Activated T-helper 1 cell treated with anti-CD3 and anti-CD28 coated beads, Interleukin-12 subunit alpha, Interleukin-12 subunit beta, Interleukin-2, Interleukin-4 antibody, amounts not matched to agents 30 ng/mL and 10 ng/mL and 1 ng/mL, durations not matched to agents 14 hours and 24 hours and 36 hours (primary cell): ENCODE measurements at regions of chr21 and their contacts with region 1.

Region 1: GRCh38 chr21:31132574-31133242 is 94.4 kb upstream of the KRTAP19-8 start:
- DNase-seq: peak; percentile 80
- H3K4me3 Mint-ChIP-seq: peak overlapping the region; percentile 79
- H3K27ac Mint-ChIP-seq: peak overlapping the region; percentile 98
- H3K4me1 Mint-ChIP-seq: peaks cover 73% of the 10 kb centered on the region
- H3K27me3 Mint-ChIP-seq: no peaks in the 10 kb centered on the region

Region 2: GRCh38 chr21:30355906-30356305 is 776.8 kb before region 1 on chr21:
- intact Hi-C with region 1: no loop called
- DNase-seq: no peak
- H3K4me3 Mint-ChIP-seq: no peak overlapping the region
- H3K27ac Mint-ChIP-seq: no peak overlapping the region
- H3K4me1 Mint-ChIP-seq: no peaks in the 10 kb centered on the region
- H3K27me3 Mint-ChIP-seq: no peaks in the 10 kb centered on the region

Region 3: GRCh38 chr21:30718239-30718909 is 414.3 kb before region 1 on chr21 and contains the start of gene KRTAP21-3:
- intact Hi-C with region 1: loop called (anchors 1 kb)
- DNase-seq: no peak
- H3K4me3 Mint-ChIP-seq: peak within 1 kb of the TSS; percentile 7
- H3K27ac Mint-ChIP-seq: peak within 1 kb of the TSS; percentile 75
- H3K4me1 Mint-ChIP-seq: peaks cover 29% of the 10 kb centered on the region
- H3K27me3 Mint-ChIP-seq: peaks cover 2% of the 10 kb centered on the region
- total RNA-seq, gene KRTAP21-3: not detected in 2 replicates

Region 4: DNA sequence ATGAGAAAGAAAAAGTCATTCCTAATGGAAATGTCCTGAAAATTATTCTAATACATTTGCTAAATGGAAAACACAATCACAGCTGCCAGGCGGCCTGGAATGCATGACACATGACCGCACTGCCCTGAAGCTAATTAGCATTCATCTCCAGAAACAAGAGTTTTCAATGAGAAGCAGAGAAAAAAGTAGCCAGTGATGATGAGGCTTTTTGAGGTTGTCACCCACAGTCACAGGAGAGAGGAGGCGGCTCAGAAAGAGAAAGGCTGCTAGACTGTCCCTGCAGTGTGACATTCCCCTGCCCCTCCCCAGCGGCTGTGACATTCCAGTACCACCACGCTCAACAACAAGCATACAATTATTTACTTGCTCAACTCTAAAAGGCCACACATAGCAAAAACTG is 28.4 kb after region 1 on chr21:
- intact Hi-C with region 1: loop called (anchors 1 kb)
- DNase-seq: no peak
- H3K4me3 Mint-ChIP-seq: no peak overlapping the region
- H3K27ac Mint-ChIP-seq: no peak overlapping the region
- H3K4me1 Mint-ChIP-seq: peaks cover 66% of the 10 kb centered on the region
- H3K27me3 Mint-ChIP-seq: no peaks in the 10 kb centered on the region

Region 5: DNA sequence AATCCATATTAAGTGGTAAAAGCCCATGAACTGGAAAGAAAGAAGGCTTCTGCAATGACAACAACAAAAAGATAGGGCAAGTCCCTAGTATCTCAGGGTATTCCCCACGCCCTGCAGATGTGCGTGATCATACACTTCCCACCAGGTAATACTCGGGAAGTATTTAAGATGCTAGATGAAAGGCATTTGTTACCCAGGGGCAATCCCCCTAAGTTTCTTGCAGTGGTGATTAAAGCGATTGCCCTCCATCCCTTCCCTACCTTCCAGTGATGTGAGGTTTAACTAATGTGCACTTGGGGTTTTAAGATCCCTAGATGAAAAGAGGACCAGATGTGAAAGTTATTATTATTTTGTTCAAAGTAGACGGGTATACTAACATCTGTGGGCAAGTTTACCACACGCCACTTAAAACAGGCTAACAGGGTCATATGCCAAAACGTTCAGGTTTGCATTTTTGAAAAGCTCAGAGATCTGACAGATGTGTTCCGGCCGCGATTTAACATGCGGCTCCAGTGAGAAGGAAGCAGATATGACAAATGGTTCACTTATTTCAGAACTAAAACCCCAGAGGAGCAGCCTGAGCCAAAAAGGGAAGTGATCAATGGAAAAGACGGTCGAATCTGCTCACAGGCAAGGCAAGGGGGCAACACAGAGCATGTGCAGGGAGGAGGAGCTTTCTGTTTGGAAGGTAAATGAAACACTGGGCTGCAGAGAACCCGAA is 194.0 kb after region 1 on chr21:
- intact Hi-C with region 1: loop called (anchors 1 kb)
- DNase-seq: peak; percentile 37
- H3K4me3 Mint-ChIP-seq: peak overlapping the region; percentile 37
- H3K27ac Mint-ChIP-seq: peak overlapping the region; percentile 82
- H3K4me1 Mint-ChIP-seq: peaks cover 43% of the 10 kb centered on the region
- H3K27me3 Mint-ChIP-seq: no peaks in the 10 kb centered on the region

Region 6: GRCh38 chr21:31426235-31426797 is 293.6 kb after region 1 on chr21:
- intact Hi-C with region 1: loop called (anchors 2 kb)
- DNase-seq: peak; percentile 2
- H3K4me3 Mint-ChIP-seq: peak overlapping the region; percentile 50
- H3K27ac Mint-ChIP-seq: peak overlapping the region; percentile 64
- H3K4me1 Mint-ChIP-seq: peaks cover 16% of the 10 kb centered on the region
- H3K27me3 Mint-ChIP-seq: peaks cover 10% of the 10 kb centered on the region

Region 7: DNA sequence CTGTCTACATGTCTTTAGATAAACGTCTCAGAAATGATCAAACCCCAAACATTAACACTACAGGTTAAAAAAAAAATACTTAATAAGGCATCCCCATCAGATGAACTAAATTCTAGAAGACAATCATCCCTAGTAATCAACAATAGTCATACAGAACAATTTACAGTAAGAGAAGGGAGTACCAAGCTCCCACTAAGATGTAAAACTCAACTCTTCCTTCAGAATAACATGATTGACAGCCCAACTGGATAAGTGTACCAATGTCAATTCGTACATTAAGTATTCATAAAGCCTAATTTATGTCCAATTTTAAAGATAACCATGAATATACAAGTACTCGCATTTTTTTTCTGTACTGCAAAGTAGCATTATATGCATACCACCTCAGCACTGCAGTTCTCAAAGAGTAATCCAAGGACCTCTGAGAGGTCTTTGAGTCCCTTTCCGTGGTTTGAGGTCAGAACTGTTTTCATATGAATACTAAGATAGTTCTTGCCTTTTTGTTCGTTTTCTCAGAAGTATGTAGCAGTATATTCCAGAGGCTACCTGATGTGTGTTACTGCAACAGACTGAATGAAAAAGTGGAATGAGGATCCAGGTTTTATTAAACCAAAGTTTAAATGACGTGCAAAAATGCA is 592.6 kb after region 1 on chr21:
- intact Hi-C with region 1: loop called (anchors 5 kb)
- DNase-seq: no peak
- H3K4me3 Mint-ChIP-seq: peak overlapping the region; percentile 49
- H3K27ac Mint-ChIP-seq: peak overlapping the region; percentile 78
- H3K4me1 Mint-ChIP-seq: peaks cover 34% of the 10 kb centered on the region
- H3K27me3 Mint-ChIP-seq: no peaks in the 10 kb centered on the region